GM12878 (cell line): ENCODE measurements at regions of chr6 and their contacts with region 1.

Region 1: GRCh38 chr6:13427801-13428582 is 59.4 kb downstream of the GFOD1 start:
- DNase-seq: peak; percentile 98
- ATAC-seq: peak; percentile 73
- H3K4me3 ChIP-seq: peak overlapping the region; percentile 22; the same call in 1 of the 2 replicates
- H3K27ac ChIP-seq: peak overlapping the region; percentile 99
- H3K4me1 ChIP-seq: peaks cover 76% of the 10 kb centered on the region
- H3K27me3 ChIP-seq: no peaks in the 10 kb centered on the region
- CTCF ChIP-seq: peak; percentile 38 to 68 (median 41); a peak in 5 of 6 replicates
- EP300 ChIP-seq: peak; percentile 79 to 91
- POLR2A ChIP-seq: peak; percentile 60
- RAD21 ChIP-seq: peak; percentile 57

Region 2: DNA sequence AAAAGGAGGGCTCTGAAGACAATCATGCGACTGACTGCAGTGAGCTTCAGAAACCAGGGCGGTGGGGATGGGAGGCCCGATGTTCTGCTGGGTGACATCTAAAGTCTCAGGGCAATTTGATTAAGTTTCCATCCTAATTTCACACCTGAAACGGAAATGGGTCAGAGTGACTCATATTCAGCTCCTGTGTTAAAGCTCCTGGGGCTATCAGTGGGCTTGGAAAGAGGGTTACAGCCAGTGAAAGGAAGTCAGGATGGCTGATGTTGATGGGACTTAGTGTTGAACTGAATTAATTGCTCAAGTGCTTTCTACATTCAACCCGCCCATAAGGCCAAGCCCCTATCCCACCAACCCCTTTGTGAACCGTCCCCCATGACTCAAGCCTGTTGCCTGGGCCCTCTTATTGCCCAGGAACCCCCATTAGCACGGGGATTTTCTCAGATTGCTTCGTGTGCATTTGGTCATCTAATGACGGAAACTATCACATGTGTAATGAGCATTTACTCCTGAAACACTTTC is 52.6 kb before region 1 on chr6:
- CTCF ChIA-PET with region 1: interaction called, 68 read pairs
- POLR2A ChIA-PET with region 1: interaction called, 55 read pairs
- RAD21 ChIA-PET with region 1: interaction called, 104 read pairs
- SMC1A ChIA-PET with region 1: interaction called, 241 read pairs
- in situ Hi-C with region 1: loop called (anchors 5 kb)
- intact Hi-C with region 1: loop called (anchors 1 kb)
- DNase-seq: peak; percentile 95
- ATAC-seq: peak; percentile 88
- H3K4me3 ChIP-seq: no peak overlapping the region
- H3K27ac ChIP-seq: peak overlapping the region; percentile 98
- H3K4me1 ChIP-seq: peaks cover 65% of the 10 kb centered on the region
- H3K27me3 ChIP-seq: no peaks in the 10 kb centered on the region
- CTCF ChIP-seq: no peak
- EP300 ChIP-seq: peak; percentile 72 to 82; a peak in 3 of 4 replicates
- POLR2A ChIP-seq: peak; percentile 38; the same call in 1 of the 2 replicates
- RAD21 ChIP-seq: no peak

Region 3: GRCh38 chr6:13413900-13414555 is 14.0 kb before region 1 on chr6:
- CTCF ChIA-PET with region 1: interaction called, 3 read pairs
- POLR2A ChIA-PET with region 1: interaction called, 3 read pairs
- RAD21 ChIA-PET with region 1: interaction called, 5 read pairs
- SMC1A ChIA-PET with region 1: interaction called, 32 read pairs
- in situ Hi-C with region 1: no loop called
- intact Hi-C with region 1: no loop called
- DNase-seq: no peak
- ATAC-seq: no peak
- H3K4me3 ChIP-seq: no peak overlapping the region
- H3K27ac ChIP-seq: no peak overlapping the region
- H3K4me1 ChIP-seq: no peaks in the 10 kb centered on the region
- H3K27me3 ChIP-seq: no peaks in the 10 kb centered on the region
- CTCF ChIP-seq: no peak
- EP300 ChIP-seq: no peak
- POLR2A ChIP-seq: no peak
- RAD21 ChIP-seq: no peak

Region 4: DNA sequence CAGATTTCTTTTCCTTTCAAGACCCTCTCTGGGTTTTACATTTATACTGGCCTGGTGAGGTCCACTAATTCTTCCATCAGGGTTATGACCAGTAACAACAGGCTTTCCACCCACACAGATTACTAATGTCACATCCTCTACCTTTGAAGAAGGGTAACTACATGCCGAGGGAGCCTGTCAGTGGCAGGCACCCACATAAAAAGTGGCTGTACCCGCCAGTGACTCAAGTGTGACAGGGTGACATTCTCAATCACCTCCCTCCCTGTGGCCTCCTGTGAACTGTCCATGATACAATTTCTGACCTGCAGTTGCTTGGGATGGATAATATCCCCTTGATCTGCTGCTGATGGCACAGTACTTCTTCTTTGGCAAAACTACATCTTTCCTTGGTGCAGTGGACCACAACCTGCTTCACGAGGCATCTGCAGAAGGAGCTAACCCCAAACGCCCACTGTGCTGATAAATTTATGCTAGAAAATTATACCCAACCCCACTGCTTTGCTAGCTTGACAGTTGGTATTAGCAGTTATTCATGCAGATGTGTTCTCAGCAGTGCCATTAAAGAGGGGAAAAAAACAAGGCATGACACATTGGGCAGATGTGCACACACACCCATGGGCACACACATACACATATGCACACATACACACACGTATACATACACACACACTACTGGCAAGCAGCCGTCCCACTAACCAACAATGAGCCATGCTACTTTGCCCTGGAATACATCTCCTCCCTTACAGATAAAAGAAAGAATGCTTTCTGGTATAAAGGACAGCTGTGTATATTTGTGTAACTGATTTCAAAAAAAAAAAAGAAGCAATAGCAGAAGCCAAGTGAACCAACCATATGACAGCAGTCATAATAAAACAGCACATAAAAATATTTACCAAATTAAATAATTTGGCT is 38.6 kb after region 1 on chr6:
- CTCF ChIA-PET with region 1: interaction called, 7 read pairs
- POLR2A ChIA-PET with region 1: interaction called, 10 read pairs
- RAD21 ChIA-PET with region 1: interaction called, 7 read pairs
- SMC1A ChIA-PET with region 1: interaction called, 179 read pairs
- in situ Hi-C with region 1: no loop called
- intact Hi-C with region 1: loop called (anchors 5 kb)
- DNase-seq: no peak
- ATAC-seq: peak; percentile 73
- H3K4me3 ChIP-seq: no peak overlapping the region
- H3K27ac ChIP-seq: peak overlapping the region; percentile 41; the same call in 1 of the 2 replicates
- H3K4me1 ChIP-seq: peaks cover 46% of the 10 kb centered on the region
- H3K27me3 ChIP-seq: no peaks in the 10 kb centered on the region
- CTCF ChIP-seq: no peak
- EP300 ChIP-seq: no peak
- POLR2A ChIP-seq: no peak
- RAD21 ChIP-seq: no peak

Region 5: GRCh38 chr6:13538084-13538483 is 110.1 kb after region 1 on chr6:
- CTCF ChIA-PET with region 1: interaction called, 17 read pairs
- POLR2A ChIA-PET with region 1: interaction called, 3 read pairs
- RAD21 ChIA-PET with region 1: interaction called, 14 read pairs
- SMC1A ChIA-PET with region 1: interaction called, 14 read pairs
- in situ Hi-C with region 1: no loop called
- intact Hi-C with region 1: loop called (anchors 2 kb)
- DNase-seq: no peak
- ATAC-seq: peak; percentile 80
- H3K4me3 ChIP-seq: no peak overlapping the region
- H3K27ac ChIP-seq: no peak overlapping the region
- H3K4me1 ChIP-seq: no peaks in the 10 kb centered on the region
- H3K27me3 ChIP-seq: no peaks in the 10 kb centered on the region
- CTCF ChIP-seq: peak; percentile 27 to 49 (median 36); a peak in 4 of 6 replicates
- EP300 ChIP-seq: no peak
- POLR2A ChIP-seq: no peak
- RAD21 ChIP-seq: peak; percentile 61

Region 6: GRCh38 chr6:13979284-13980171 is 551.5 kb after region 1 on chr6:
- CTCF ChIA-PET with region 1: no interaction called
- POLR2A ChIA-PET with region 1: no interaction called
- RAD21 ChIA-PET with region 1: no interaction called
- SMC1A ChIA-PET with region 1: no interaction called
- in situ Hi-C with region 1: no loop called
- intact Hi-C with region 1: no loop called
- DNase-seq: no peak
- ATAC-seq: no peak
- H3K4me3 ChIP-seq: no peak overlapping the region
- H3K27ac ChIP-seq: no peak overlapping the region
- H3K4me1 ChIP-seq: no peaks in the 10 kb centered on the region
- H3K27me3 ChIP-seq: 0 out of 4 replicates have a peak, but pooled peaks cover 2 to 3% of the 10 kb centered on the region in 2 experiments
- CTCF ChIP-seq: no peak
- EP300 ChIP-seq: no peak
- POLR2A ChIP-seq: no peak
- RAD21 ChIP-seq: no peak

Region 7: GRCh38 chr6:14095437-14095836 is 667.4 kb after region 1 on chr6:
- CTCF ChIA-PET with region 1: no interaction called
- POLR2A ChIA-PET with region 1: no interaction called
- RAD21 ChIA-PET with region 1: no interaction called
- SMC1A ChIA-PET with region 1: no interaction called
- in situ Hi-C with region 1: no loop called
- intact Hi-C with region 1: no loop called
- DNase-seq: no peak
- ATAC-seq: peak; percentile 79
- H3K4me3 ChIP-seq: no peak overlapping the region
- H3K27ac ChIP-seq: peak overlapping the region; percentile 80; the same call in 1 of the 2 replicates
- H3K4me1 ChIP-seq: peaks cover 56% of the 10 kb centered on the region
- H3K27me3 ChIP-seq: no peaks in the 10 kb centered on the region
- CTCF ChIP-seq: no peak
- EP300 ChIP-seq: peak; percentile 87 to 91; a peak in 3 of 4 replicates
- POLR2A ChIP-seq: no peak
- RAD21 ChIP-seq: no peak